Activated CD8-positive, alpha-beta T cell treated with anti-CD3 and anti-CD28 coated beads for 36 hours (primary cell): ENCODE measurements at regions of chr4 and their contacts with region 1.

Region 1: DNA sequence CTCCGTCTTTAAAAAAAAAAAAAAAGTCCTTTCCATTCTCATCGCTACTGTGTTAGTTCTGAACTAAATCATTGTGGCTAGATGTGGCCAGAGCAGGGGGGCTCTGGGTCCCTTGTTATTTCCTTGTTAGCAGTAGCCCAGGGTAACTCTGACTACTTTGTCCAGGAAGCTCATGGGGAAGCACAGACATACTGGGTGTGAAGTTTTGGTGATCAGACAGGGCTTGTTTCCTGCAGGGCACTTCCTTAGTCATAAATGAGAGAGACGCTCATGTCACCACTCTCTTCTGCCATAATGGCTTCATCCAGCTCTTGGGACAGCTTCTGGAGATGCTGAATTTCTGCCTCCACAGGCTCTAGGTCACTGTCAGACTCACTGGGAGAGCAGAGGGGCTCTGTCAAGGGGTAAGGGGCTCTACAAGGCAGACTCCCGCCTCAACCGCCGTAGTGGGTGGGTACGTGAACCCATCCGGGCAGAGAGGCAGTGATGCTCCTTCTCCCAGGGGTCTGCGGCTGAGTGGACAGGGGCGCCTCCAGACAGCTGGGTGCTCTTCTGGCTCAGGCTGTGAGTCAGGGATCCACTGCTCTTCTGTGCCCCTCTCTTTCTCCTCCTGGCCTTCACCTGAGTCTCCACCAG is 12.9 kb downstream of the STIM2 start:
- DNase-seq: peak; percentile 93
- ATAC-seq: peak; percentile 95
- H3K4me3 Mint-ChIP-seq: peak overlapping the region; percentile 44
- H3K27ac Mint-ChIP-seq: peak overlapping the region; percentile 88
- H3K4me1 Mint-ChIP-seq: peaks cover 82% of the 10 kb centered on the region
- H3K27me3 Mint-ChIP-seq: no peaks in the 10 kb centered on the region
- CTCF ChIP-seq: no peak

Region 2: DNA sequence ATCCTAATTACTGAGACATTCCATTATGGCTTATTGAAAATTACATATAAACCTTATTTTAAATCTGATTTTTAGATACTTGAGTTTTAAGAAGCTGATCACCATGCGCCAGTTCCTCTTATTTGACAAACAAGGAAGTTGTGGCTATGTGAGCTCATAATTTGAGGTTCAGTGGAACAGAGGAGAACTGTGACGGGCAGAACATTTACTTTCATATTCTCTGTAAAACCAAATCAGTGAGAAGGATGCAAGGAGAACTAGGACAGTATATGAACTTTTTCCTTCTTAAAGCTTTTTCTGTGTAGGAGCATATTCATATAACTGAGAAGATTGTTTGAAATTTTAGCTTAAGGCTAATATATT is 12.4 kb after region 1 on chr4:
- CTCF ChIA-PET with region 1: interaction called, 11 read pairs
- POLR2A ChIA-PET with region 1: interaction called, 22 read pairs
- intact Hi-C with region 1: loop called (anchors 2 kb)
- DNase-seq: peak; percentile 58
- ATAC-seq: peak; percentile 52
- H3K4me3 Mint-ChIP-seq: peak overlapping the region; percentile 62
- H3K27ac Mint-ChIP-seq: peak overlapping the region; percentile 96
- H3K4me1 Mint-ChIP-seq: peaks cover 68% of the 10 kb centered on the region
- H3K27me3 Mint-ChIP-seq: no peaks in the 10 kb centered on the region
- CTCF ChIP-seq: no peak

Region 3: DNA sequence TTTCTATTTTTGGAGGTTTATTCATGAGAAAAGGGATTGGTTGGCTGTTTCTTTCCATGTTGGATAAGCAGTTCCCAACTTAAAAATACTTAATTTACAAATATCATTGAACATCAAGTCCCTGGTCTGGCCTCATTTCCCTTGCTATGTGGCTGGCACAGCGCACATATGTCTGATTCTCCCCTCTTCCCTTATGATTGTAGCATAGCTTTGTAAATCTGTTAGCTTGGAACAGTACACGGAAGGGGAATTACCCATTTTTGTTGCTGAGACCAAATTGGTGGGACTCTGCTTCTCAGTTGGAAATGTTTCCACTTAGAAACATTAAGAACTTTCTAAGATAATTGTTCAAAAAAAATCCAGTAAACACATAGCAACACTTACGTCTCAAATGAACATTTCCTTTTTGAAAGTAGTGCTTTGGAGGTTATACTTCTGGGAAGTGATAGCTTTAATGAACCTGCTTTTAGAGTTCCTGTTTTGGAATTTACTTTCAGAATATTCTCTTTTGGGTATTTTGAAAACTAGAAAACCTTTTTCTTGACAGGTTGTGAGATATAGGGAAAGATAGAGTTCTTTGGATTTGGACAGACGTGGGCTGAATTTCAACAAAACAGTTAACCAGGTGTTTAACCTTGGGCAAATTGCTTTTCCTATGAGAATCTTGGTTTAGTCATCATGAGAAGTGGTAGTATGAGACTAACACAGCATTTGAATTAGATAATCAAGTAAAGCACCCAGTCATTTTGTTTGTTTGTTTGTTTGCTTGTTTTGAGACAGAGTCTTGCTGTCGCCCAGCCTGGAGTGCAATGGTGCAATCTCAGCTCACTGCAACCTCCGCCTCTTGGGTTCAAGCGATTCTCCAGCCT is 34.5 kb after region 1 on chr4:
- CTCF ChIA-PET with region 1: no interaction called
- POLR2A ChIA-PET with region 1: interaction called, 4 read pairs
- intact Hi-C with region 1: loop called (anchors 5 kb)
- DNase-seq: no peak
- ATAC-seq: no peak
- H3K4me3 Mint-ChIP-seq: no peak overlapping the region
- H3K27ac Mint-ChIP-seq: peak overlapping the region; percentile 22
- H3K4me1 Mint-ChIP-seq: peaks cover 69% of the 10 kb centered on the region
- H3K27me3 Mint-ChIP-seq: no peaks in the 10 kb centered on the region
- CTCF ChIP-seq: no peak